ENCODE measurements at regions of chr14 and their contacts with region 1.

Region 1: DNA sequence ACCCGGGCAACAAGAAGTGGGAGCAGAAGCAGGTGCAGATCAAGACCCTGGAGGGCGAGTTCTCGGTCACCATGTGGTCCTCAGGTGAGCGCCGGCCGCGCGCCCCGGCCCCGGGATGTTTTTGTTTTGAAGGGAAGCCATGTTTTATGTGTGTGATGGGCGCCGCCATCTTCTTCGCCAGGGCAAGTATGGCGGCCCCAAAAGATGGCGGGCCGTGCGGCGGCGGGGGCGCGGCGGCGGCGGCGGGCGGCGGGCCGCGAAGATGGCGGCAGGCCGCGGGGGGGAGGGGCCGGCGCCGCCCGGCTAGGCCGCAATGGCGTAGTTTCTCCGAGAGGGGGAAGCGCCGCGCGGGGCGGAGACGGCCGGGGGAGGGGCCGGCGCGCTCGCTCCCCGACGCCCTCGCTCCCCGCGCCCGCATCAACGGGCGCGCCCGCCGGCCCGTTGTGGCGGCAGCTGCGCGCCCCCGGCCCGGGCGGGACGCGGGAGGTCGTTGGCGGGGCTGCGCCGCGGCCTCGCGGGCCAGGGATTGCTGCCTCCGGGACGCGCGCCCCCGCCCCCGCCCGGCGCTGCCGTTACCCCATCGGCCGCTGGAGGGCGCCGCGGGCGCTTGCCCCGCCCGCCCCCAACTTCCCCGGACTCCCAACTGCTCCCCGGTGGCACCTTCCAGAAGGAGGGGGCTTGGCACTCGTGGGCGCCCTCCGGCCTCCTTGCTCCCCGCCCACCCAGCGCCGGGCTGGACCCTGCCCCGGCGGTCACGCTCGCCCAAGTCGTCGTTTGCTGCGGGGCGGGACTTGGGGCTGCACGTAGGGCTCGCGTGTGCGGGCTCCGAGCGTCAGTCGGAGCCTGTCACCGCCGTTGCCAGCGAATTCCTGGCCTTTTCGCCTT is 1.1 kb downstream of the YY1 start:
- DNase-seq: peak; percentile 81 to 90 (median 84)
- H3K4me3 ChIP-seq: peak overlapping the region; percentile 72
- H3K4me3 Mint-ChIP-seq: peak overlapping the region; percentile 90 to 100 (median 93)
- H3K27ac ChIP-seq: peak overlapping the region; percentile 62
- H3K27ac Mint-ChIP-seq: peak overlapping the region; percentile 92 to 100 (median 96)
- H3K4me1 ChIP-seq: peaks cover 63% of the 10 kb centered on the region
- H3K4me1 Mint-ChIP-seq: peaks cover 49 to 70% (median 67%) of the 10 kb centered on the region in 3 donors
- H3K27me3 ChIP-seq: no peaks in the 10 kb centered on the region
- H3K27me3 Mint-ChIP-seq: peaks cover 0 to 1% of the 10 kb centered on the region in 2 donors

Region 2: GRCh38 chr14:100256339-100256895 is 16.3 kb after region 1 on chr14:
- CTCF ChIA-PET with region 1: interaction called, 12 read pairs
- POLR2A ChIA-PET with region 1: interaction called, 5 read pairs
- DNase-seq: no peak
- H3K4me3 ChIP-seq: no peak overlapping the region
- H3K4me3 Mint-ChIP-seq: peak overlapping the region in 4 of 7 donors; percentile 16 to 54 (median 20)
- H3K27ac ChIP-seq: no peak overlapping the region
- H3K27ac Mint-ChIP-seq: peak overlapping the region in 5 of 8 donors; percentile 0 to 61 (median 3)
- H3K4me1 ChIP-seq: peaks cover 78% of the 10 kb centered on the region
- H3K4me1 Mint-ChIP-seq: peaks cover 67 to 92% (median 90%) of the 10 kb centered on the region in 3 donors
- H3K27me3 ChIP-seq: no peaks in the 10 kb centered on the region
- H3K27me3 Mint-ChIP-seq: no peaks in the 10 kb centered on the region